A549 (cell line): ENCODE measurements at regions of chr2 and their contacts with region 1.

Region 1: GRCh38 chr2:44955593-44956392 is 14.3 kb downstream of the SIX3 start:
- DNase-seq: peak; percentile 79
- ATAC-seq: peak; percentile 75 to 87
- H3K4me3 ChIP-seq: peak overlapping the region; percentile 36
- H3K27ac ChIP-seq: peak overlapping the region; percentile 64 to 71; a peak in 4 of 6 replicates
- H3K4me1 ChIP-seq: peaks cover 25% of the 10 kb centered on the region
- CTCF ChIP-seq: peak; percentile 98
- EP300 ChIP-seq: no peak
- POLR2A ChIP-seq: no peak
- RAD21 ChIP-seq: peak; percentile 98 to 99

Region 2: GRCh38 chr2:44377486-44377885 is 578.3 kb before region 1 on chr2:
- CTCF ChIA-PET with region 1: interaction called, 15 read pairs
- POLR2A ChIA-PET with region 1: no interaction called
- DNase-seq: no peak
- ATAC-seq: no peak
- H3K4me3 ChIP-seq: no peak overlapping the region
- H3K27ac ChIP-seq: no peak overlapping the region
- H3K4me1 ChIP-seq: no peaks in the 10 kb centered on the region
- CTCF ChIP-seq: no peak
- EP300 ChIP-seq: no peak
- POLR2A ChIP-seq: no peak
- RAD21 ChIP-seq: no peak

Region 3: DNA sequence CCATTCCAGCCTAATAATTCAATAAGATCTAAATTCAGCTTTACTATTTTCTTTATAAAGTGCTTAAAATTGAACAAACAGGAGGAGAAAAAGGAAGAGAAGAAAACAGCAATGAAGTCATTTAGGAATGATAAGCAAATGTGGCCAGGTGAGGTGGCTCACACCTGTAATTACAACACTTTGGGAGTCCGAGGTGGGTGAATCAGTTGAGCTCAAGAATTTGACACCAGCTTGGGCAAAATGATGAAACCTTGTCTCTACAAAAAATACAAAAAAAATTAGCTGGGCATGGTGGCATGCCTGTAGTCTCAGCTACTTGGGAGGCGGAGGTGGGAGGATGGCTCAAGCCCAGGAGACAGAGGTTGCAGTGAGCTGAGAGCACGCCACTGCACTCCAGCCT is 465.1 kb before region 1 on chr2:
- CTCF ChIA-PET with region 1: interaction called, 12 read pairs
- POLR2A ChIA-PET with region 1: no interaction called
- DNase-seq: no peak
- ATAC-seq: no peak
- H3K4me3 ChIP-seq: no peak overlapping the region
- H3K27ac ChIP-seq: no peak overlapping the region
- H3K4me1 ChIP-seq: no peaks in the 10 kb centered on the region
- CTCF ChIP-seq: no peak
- EP300 ChIP-seq: no peak
- POLR2A ChIP-seq: no peak
- RAD21 ChIP-seq: no peak

Region 4: DNA sequence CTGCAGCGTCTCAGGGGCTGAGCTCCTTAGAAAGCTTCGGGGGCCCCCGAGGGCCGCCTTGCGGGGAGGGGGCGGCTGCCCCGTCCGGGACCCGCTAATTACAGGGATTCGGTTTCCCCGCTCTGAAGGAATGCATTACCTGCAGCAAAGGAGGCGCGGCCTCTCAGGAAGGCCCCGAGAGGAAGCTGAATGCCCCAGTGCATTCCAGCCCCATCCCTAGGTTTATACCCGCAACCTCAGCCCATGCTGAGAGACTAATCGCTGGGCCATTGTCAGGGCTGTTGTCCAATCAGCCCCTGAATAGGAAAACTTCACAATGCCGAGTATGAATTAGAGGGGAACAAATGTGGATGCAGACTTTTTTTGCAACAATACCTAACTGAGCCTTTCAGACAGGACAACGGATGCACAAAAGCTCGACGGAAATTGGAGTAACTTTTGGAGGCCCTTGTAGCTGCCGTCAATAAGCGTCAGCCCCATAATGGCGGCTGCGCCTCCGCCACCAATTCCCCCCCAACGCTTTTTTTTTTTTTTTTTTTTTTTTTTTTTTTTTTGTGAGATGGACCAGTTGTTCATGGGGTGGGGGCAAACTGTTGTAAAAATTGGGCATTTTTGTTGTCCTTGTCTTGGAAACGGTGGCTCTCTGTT is 152.9 kb before region 1 on chr2:
- CTCF ChIA-PET with region 1: interaction called, 12 read pairs
- POLR2A ChIA-PET with region 1: no interaction called
- DNase-seq: no peak
- ATAC-seq: no peak
- H3K4me3 ChIP-seq: no peak overlapping the region
- H3K27ac ChIP-seq: no peak overlapping the region
- H3K4me1 ChIP-seq: no peaks in the 10 kb centered on the region
- CTCF ChIP-seq: no peak
- EP300 ChIP-seq: no peak
- POLR2A ChIP-seq: no peak
- RAD21 ChIP-seq: no peak

Region 5: GRCh38 chr2:44906972-44907371 is 48.8 kb before region 1 on chr2:
- CTCF ChIA-PET with region 1: interaction called, 10 read pairs
- POLR2A ChIA-PET with region 1: no interaction called
- DNase-seq: no peak
- ATAC-seq: peak; percentile 47 to 66; a peak in 4 of 6 replicates
- H3K4me3 ChIP-seq: no peak overlapping the region
- H3K27ac ChIP-seq: no peak overlapping the region
- H3K4me1 ChIP-seq: no peaks in the 10 kb centered on the region
- CTCF ChIP-seq: no peak
- EP300 ChIP-seq: no peak
- POLR2A ChIP-seq: no peak
- RAD21 ChIP-seq: no peak

Region 6: DNA sequence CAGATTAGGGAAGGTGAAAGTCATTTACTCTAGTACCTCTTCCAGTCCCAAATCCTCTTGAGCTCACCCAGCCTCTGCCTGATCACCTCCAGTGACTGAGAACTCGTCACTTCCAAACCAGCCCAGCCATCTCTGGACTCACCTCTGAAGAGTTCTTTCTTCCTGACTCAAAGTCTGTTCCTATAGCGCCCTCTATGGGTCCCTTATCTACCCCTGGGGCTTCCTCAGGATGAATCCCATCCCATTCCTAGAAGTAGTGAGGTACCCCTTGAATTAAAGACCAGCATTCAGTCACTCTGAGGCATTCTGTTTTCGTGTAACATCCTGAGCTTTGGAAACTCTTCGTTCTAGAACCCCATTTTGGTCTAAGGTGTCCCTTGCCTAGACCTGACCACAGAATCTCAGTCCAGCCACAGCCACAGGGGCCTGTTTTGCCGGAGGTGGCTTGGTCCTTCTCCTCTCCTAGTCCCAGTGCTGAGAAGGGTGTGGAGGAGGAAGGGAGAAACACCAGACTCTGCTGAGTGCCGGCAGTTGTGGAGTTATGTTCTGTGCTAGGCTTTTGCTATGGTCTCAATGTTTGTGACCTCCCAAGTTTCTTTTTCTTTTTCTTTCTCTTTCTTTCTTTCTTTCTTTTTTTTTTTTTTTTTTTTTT is 18.4 kb after region 1 on chr2:
- CTCF ChIA-PET with region 1: interaction called, 33 read pairs
- POLR2A ChIA-PET with region 1: no interaction called
- DNase-seq: peak; percentile 77 to 79
- ATAC-seq: peak; percentile 73 to 90; a peak in 5 of 6 replicates
- H3K4me3 ChIP-seq: no peak overlapping the region
- H3K27ac ChIP-seq: no peak overlapping the region; a peak in 1 of 6 replicates
- H3K4me1 ChIP-seq: peaks cover 8% of the 10 kb centered on the region; the same call in 1 of the 3 replicates
- CTCF ChIP-seq: peak; percentile 64
- EP300 ChIP-seq: no peak
- POLR2A ChIP-seq: no peak
- RAD21 ChIP-seq: peak; percentile 70 to 86

Region 7: DNA sequence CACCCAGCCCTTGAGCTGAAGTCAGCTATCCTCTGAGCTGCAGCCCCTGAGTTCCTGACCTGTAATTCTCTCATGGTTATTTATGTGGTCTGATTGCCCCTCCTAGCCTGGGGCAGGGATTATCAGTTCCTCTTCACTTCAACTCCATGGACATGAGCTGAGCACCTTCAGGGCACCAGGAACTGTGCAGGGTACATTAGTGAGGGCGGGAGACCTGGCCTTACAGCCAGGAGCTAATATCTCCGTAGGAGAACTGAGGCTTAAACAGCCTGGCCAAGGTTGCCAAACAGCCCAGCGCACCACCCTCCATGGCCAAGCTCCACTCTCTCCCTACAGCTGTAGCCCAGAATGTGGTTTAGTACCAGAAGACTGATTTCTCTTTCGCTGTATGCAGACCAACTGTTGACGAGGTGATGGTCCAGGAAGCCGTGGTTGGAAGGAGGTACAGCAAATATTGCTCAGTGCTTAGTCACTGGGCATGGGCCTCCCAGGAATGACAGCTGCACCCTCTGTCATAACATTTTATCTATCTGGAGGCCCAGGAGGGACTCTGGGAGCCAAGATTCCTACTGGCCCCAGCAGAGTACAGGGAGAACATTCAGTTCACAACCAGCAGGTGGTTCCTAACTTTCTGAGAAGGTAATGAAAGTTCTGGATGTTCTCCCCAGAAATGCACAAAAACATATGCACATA is 282.2 kb after region 1 on chr2:
- CTCF ChIA-PET with region 1: no interaction called
- POLR2A ChIA-PET with region 1: no interaction called
- DNase-seq: peak; percentile 74 to 84
- ATAC-seq: peak; percentile 96 to 97
- H3K4me3 ChIP-seq: no peak overlapping the region
- H3K27ac ChIP-seq: peak overlapping the region; percentile 68 to 72; a peak in 5 of 6 replicates
- H3K4me1 ChIP-seq: peaks cover 28% of the 10 kb centered on the region
- CTCF ChIP-seq: peak; percentile 27; the same call in 1 of the 3 replicates
- EP300 ChIP-seq: no peak
- POLR2A ChIP-seq: no peak
- RAD21 ChIP-seq: peak; percentile 39 to 41; a peak in 4 of 5 replicates